Heart right ventricle (tissue), 16 donors: ENCODE measurements at regions of chr6 and their contacts with region 1.

Region 1: DNA sequence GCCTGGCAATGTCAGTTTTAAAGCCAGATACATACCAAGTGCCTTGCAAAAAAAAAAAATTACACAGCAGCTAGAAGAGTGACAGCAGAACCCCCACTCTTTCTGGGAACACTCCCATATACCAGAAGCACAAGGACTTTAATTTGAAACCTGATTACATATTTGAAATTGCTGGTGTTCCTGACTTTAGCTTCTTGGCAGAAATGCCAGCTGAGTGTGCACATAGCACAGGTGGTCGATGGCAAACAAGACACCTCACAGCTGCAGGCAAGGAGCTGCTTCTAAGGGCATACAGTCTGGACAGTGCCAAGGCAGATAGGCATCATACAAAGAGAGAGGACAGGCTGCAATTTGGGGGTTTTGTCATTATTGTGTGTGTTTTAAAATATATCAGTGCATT is 150.7 kb upstream of the SGK1 start:
- DNase-seq: no peak
- ATAC-seq: no peak
- H3K4me3 ChIP-seq: no peak overlapping the region
- H3K27ac ChIP-seq: no peak overlapping the region
- H3K4me1 ChIP-seq: peaks cover 0 to 10% (median 0%) of the 10 kb centered on the region in 9 donors
- H3K27me3 ChIP-seq: no peaks in the 10 kb centered on the region
- CTCF ChIP-seq: no peak

Region 2: DNA sequence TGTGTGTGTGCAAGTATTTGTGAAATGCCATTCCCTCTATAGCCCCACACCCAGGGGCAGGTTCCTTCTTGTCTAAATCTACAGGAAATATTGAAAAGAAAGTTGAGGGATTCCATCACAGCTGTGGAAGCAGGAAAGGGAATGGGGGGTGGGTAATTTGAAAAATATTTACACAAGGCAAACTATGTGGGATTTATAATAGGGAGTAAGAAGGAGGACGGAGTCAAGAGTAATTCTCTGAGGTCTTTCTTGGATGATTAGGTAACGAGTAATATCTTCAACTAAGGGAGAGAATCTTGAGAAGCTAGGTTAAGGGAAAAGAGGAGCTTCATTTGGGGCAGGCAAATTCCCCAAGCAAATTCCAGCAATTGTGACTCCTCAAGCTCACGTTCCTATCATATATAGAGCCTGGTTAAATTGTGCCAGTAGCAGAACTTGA is 37.2 kb before region 1 on chr6:
- intact Hi-C with region 1: loop called in 1 of 10 experiments (anchors 1 kb)
- DNase-seq: no peak
- ATAC-seq: no peak
- H3K4me3 ChIP-seq: no peak overlapping the region
- H3K27ac ChIP-seq: no peak overlapping the region
- H3K4me1 ChIP-seq: peaks cover 0 to 11% (median 0%) of the 10 kb centered on the region in 9 donors
- H3K27me3 ChIP-seq: no peaks in the 10 kb centered on the region
- CTCF ChIP-seq: no peak